CD14-positive monocyte (primary cell): ENCODE measurements at regions of chr9 and their contacts with region 1.

Region 1: DNA sequence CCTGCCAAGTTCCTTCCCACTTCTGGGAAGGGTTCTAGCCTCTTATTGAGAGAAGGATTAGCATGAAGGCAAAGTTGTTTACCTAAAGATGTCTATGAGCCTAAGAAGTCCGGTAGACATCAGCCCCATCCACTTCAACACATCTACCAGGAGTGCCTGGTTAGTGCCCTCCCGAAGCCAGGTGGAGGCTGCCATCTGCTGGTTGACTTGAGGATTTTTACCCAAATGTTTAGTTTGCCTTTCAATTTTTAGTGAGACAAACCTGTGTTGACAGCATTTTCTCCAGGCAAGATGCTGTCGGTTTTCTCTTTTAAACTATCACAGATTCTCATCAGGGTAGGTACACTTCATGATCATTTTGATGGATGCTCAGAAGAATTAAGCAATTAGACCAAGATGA is 83.6 kb upstream of the TNFSF8 start:
- DNase-seq: peak; percentile 74 to 84 (median 83)
- H3K4me3 ChIP-seq: no peak overlapping the region
- H3K4me3 Mint-ChIP-seq: no peak overlapping the region
- H3K27ac ChIP-seq: no peak overlapping the region
- H3K27ac Mint-ChIP-seq: peak overlapping the region in 2 of 7 donors; percentile 4 to 71
- H3K4me1 ChIP-seq: peaks cover 6 to 14% of the 10 kb centered on the region in 2 donors
- H3K4me1 Mint-ChIP-seq: peaks cover 50% of the 10 kb centered on the region
- H3K27me3 ChIP-seq: no peaks in the 10 kb centered on the region
- H3K27me3 Mint-ChIP-seq: peaks cover 2 to 3% (median 3%) of the 10 kb centered on the region in 3 donors
- CTCF ChIP-seq: peak; percentile 84

Region 2: DNA sequence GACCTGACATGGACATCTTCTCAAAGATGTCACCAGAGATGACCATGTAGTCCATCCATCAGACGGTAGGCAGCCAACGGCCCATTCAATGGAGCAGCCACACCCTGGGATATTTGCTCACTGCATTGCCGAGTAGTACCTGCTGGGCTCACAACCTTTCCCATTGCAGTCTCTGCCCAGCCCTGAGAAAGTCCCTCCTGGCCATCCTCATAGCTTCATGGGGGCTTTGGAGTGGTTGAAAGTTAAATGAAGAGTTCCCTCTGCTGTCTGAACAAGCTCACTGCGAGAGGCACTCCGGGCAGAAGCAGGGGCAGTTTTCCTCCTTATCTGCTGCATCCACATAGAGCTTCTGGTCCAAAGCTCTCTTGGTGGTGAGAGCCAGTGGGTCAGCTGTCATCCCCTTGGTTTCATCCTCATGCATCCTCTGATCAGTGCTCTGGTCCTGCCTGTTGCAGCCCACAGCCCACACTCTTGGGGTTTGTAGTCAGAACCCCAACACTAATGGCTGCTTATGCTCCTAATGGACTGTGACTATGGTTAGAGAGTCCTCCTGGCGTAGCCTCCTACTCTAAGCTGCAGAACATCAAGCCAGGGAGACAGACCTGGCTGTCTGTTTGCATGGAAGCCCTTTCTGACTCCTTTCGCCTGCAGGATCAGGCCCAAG is 107.0 kb before region 1 on chr9:
- intact Hi-C with region 1: loop called in 1 of 2 experiments (anchors 10 kb)
- DNase-seq: no peak
- H3K4me3 ChIP-seq: no peak overlapping the region
- H3K4me3 Mint-ChIP-seq: no peak overlapping the region
- H3K27ac ChIP-seq: no peak overlapping the region
- H3K27ac Mint-ChIP-seq: peak overlapping the region in 2 of 7 donors; percentile 24 to 46
- H3K4me1 ChIP-seq: peaks cover 0 to 7% of the 10 kb centered on the region in 2 donors
- H3K4me1 Mint-ChIP-seq: peaks cover 40% of the 10 kb centered on the region
- H3K27me3 ChIP-seq: no peaks in the 10 kb centered on the region
- H3K27me3 Mint-ChIP-seq: no peaks in the 10 kb centered on the region
- CTCF ChIP-seq: peak; percentile 33